A673 (cell line): ENCODE measurements at regions of chr11 and their contacts with region 1.

Region 1: DNA sequence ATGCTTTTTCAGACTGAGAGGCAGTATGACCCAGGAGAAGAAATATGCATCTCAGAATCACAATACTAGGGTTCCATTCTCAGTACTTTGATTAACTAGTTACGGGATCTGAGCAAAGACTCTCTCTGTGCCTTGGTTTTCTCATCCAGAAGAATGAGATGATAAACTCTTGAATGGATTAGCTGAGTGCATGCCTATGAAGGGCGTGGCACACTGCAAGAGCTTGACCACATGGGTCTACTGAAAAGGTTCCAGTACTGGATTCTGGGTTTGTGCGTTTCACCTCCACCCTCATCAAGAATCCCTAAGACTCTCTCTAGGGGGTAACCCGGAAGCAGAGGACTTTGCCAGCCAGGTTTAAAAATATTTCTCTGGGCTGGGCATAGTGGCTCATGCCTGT is 25.6 kb downstream of the PGA5 start:
- DNase-seq: no peak
- H3K4me3 ChIP-seq: no peak overlapping the region
- H3K27ac ChIP-seq: no peak overlapping the region
- H3K4me1 ChIP-seq: no peaks in the 10 kb centered on the region
- H3K27me3 ChIP-seq: no peaks in the 10 kb centered on the region
- CTCF ChIP-seq: no peak

Region 2: GRCh38 chr11:60985991-60986915 is 280.3 kb before region 1 on chr11:
- CTCF ChIA-PET with region 1: interaction called, 11 read pairs
- POLR2A ChIA-PET with region 1: no interaction called
- intact Hi-C with region 1: no loop called
- DNase-seq: no peak
- H3K4me3 ChIP-seq: no peak overlapping the region
- H3K27ac ChIP-seq: no peak overlapping the region
- H3K4me1 ChIP-seq: no peaks in the 10 kb centered on the region
- H3K27me3 ChIP-seq: no peaks in the 10 kb centered on the region
- CTCF ChIP-seq: no peak

Region 3: GRCh38 chr11:61392981-61393595 is 126.5 kb after region 1 on chr11:
- CTCF ChIA-PET with region 1: no interaction called
- POLR2A ChIA-PET with region 1: no interaction called
- intact Hi-C with region 1: loop called (anchors 5 kb)
- DNase-seq: peak; percentile 67
- H3K4me3 ChIP-seq: peak overlapping the region; percentile 78
- H3K27ac ChIP-seq: peak overlapping the region; percentile 62
- H3K4me1 ChIP-seq: peaks cover 10% of the 10 kb centered on the region
- H3K27me3 ChIP-seq: no peaks in the 10 kb centered on the region
- CTCF ChIP-seq: peak; percentile 48

Region 4: DNA sequence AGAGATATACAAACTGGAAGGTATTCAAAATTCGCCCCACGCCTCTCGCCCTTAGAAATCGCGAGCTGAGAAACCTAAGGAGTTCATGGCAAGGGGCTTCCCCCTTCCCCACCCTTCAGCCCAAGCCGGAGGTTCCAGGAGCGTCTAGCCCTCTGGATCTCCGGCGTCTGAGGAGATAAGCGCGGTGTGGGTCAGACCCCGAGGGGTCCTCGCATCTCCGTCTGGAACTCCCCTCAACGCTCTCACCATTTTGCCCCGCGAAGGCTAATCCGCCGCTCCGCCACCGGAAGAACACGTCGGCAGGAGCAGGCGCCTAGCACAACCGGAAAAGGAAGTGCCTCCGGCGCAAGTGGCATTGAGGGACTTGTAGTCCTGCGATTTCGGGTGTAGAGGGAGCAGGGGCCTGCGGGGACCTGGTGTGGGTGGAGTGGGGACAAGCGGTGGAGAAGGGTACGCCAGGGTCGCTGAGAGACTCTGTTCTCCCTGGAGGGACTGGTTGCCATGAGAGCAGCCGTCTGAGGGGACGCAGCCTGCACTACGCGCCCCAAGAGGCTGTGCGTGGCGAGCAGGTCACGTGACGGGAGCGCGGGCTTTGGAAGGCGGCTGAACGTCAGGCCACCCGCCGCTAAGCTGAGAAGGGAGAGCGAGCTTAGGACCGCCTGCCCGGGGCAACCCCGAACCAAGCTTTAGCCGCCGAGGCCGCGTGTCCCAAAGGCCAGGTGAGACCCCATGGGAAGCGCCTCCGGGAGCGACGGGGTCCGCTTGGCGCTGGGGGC is 525.9 kb after region 1 on chr11 and contains the starts of genes FEN1 and TMEM258:
- CTCF ChIA-PET with region 1: no interaction called
- POLR2A ChIA-PET with region 1: no interaction called
- intact Hi-C with region 1: no loop called
- DNase-seq: peak; percentile 98
- H3K4me3 ChIP-seq: peak within 1 kb of the TSS; percentile 100
- H3K27ac ChIP-seq: peak within 1 kb of the TSS; percentile 100
- H3K4me1 ChIP-seq: peaks cover 16% of the 10 kb centered on the region
- H3K27me3 ChIP-seq: no peaks in the 10 kb centered on the region
- CTCF ChIP-seq: no peak
- total RNA-seq, gene FEN1: 140 and 152 TPM in 2 replicates
- total RNA-seq, gene TMEM258: 138 and 139 TPM in 2 replicates